Upper lobe of right lung (tissue), 1 donor: ENCODE measurements at regions of chr6 and their contacts with region 1.

Region 1: GRCh38 chr6:150334790-150335783 is 33.7 kb upstream of the IYD start:
- DNase-seq: no peak
- ATAC-seq: peak; percentile 74
- H3K4me3 ChIP-seq: no peak overlapping the region
- H3K27ac ChIP-seq: no peak overlapping the region
- H3K4me1 ChIP-seq: no peaks in the 10 kb centered on the region
- H3K27me3 ChIP-seq: no peaks in the 10 kb centered on the region
- CTCF ChIP-seq: peak; percentile 80

Region 2: GRCh38 chr6:150079604-150080003 is 255.5 kb before region 1 on chr6:
- intact Hi-C with region 1: loop called (anchors 5 kb)
- DNase-seq: no peak
- ATAC-seq: no peak
- H3K4me3 ChIP-seq: no peak overlapping the region
- H3K27ac ChIP-seq: no peak overlapping the region
- H3K4me1 ChIP-seq: no peaks in the 10 kb centered on the region
- H3K27me3 ChIP-seq: no peaks in the 10 kb centered on the region
- CTCF ChIP-seq: no peak

Region 3: DNA sequence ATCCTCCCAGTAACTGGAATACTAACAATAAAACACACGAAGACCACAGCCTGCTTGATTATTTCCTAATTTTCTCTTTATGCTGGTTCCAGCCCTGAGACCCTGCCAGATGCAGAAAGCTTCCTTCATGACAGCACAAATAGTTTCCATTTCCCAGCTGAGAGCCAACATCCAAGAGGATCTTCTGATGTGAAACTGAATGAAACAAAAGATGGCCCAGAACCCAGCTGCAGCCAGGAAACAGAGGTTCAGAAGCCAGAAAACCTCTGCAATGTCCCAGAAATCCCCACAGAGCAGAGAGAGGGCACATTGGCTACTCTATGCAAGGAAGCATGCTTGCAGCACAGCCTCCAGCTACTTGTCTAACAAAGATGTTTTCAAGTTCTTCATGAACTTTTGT is 202.8 kb after region 1 on chr6:
- intact Hi-C with region 1: no loop called
- DNase-seq: no peak
- ATAC-seq: no peak
- H3K4me3 ChIP-seq: no peak overlapping the region
- H3K27ac ChIP-seq: no peak overlapping the region
- H3K4me1 ChIP-seq: no peaks in the 10 kb centered on the region
- H3K27me3 ChIP-seq: no peaks in the 10 kb centered on the region
- CTCF ChIP-seq: no peak